CD8-positive, alpha-beta T cell (primary cell): ENCODE measurements at regions of chr19 and their contacts with region 1.

Region 1: GRCh38 chr19:24086974-24087595 is at the start of gene ZNF254:
- DNase-seq: peak; percentile 58 to 91 (median 78)
- ATAC-seq: peak; percentile 99
- H3K4me3 ChIP-seq: peak within 1 kb of the TSS; percentile 70 to 99
- H3K4me3 Mint-ChIP-seq: peak within 1 kb of the TSS; percentile 96
- H3K27ac ChIP-seq: peak within 1 kb of the TSS; percentile 80 to 92
- H3K27ac Mint-ChIP-seq: peak within 1 kb of the TSS; percentile 97
- H3K4me1 ChIP-seq: peaks cover 10% of the 10 kb centered on the region
- H3K4me1 Mint-ChIP-seq: peaks cover 24% of the 10 kb centered on the region
- H3K27me3 ChIP-seq: no peaks in the 10 kb centered on the region
- H3K27me3 Mint-ChIP-seq: no peaks in the 10 kb centered on the region
- CTCF ChIP-seq: no peak
- total RNA-seq, gene ZNF254: 11.2 to 14.2 TPM

Region 2: DNA sequence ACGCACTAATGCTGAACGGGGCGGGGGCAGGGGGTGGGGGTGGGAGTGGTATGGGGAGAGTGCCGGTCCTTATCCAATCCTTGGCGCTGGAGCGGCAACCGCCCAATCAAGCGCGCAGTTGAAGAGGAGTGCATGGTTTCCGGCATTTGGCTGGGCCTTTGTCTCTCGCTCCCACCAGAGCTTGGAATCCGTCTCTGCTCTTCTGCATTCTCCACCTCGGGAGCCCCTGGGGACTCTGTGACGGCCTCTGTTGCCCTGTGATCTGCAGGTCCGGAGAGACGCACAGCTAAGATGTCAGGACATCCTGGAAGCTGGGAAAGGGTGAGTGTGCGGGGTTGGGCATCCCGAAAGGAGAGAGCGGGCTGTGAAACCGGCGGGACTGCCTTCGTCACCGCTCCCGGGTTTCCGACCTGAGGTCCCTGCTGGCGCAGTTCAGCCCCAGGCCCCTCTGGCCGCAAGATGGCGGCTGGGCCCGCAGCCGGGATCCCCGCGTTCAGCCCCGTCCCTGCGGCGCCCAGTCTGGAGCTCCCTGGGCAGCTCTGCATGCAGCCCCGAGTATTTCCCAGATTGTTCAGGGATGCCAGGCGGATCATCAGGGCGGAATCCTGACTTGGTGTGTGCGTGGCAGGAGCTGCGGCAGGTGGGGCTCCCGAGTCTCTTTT is 53.7 kb before region 1 on chr19:
- CTCF ChIA-PET with region 1: interaction called, 3 read pairs
- POLR2A ChIA-PET with region 1: interaction called, 23 read pairs
- intact Hi-C with region 1: loop called (anchors 1 to 5 kb)
- DNase-seq: peak; percentile 70 to 92 (median 84)
- ATAC-seq: peak; percentile 99
- H3K4me3 ChIP-seq: peak overlapping the region; percentile 99
- H3K4me3 Mint-ChIP-seq: peak overlapping the region; percentile 100
- H3K27ac ChIP-seq: peak overlapping the region; percentile 88 to 92
- H3K27ac Mint-ChIP-seq: peak overlapping the region; percentile 99
- H3K4me1 ChIP-seq: peaks cover 34% of the 10 kb centered on the region
- H3K4me1 Mint-ChIP-seq: peaks cover 48% of the 10 kb centered on the region
- H3K27me3 ChIP-seq: no peaks in the 10 kb centered on the region
- H3K27me3 Mint-ChIP-seq: no peaks in the 10 kb centered on the region
- CTCF ChIP-seq: no peak